ENCODE measurements at regions of chr12 and their contacts with region 1.

Region 1: GRCh38 chr12:69470189-69471075 is at the start of gene FRS2:
- DNase-seq: peak; percentile 95
- H3K4me3 ChIP-seq: peak within 1 kb of the TSS; percentile 91 to 99 (median 98)
- H3K27ac ChIP-seq: peak within 1 kb of the TSS; percentile 91 to 97 (median 96)
- H3K4me1 ChIP-seq: peaks cover 0 to 51% (median 45%) of the 10 kb centered on the region in 4 donors
- H3K27me3 ChIP-seq: no peaks in the 10 kb centered on the region
- CTCF ChIP-seq: peak in 2 of 4 experiments; percentile 6 to 25
- EP300 ChIP-seq: peak in 1 of 4 donors; percentile 32
- POLR2A ChIP-seq: peak; percentile 80 to 86
- total RNA-seq, gene FRS2: 33.8 to 48.4 (median 40.3) TPM

Region 2: GRCh38 chr12:69511469-69512267 is 41.2 kb after region 1 on chr12:
- intact Hi-C with region 1: loop called (anchors 5 kb)
- DNase-seq: no peak
- H3K4me3 ChIP-seq: no peak overlapping the region
- H3K27ac ChIP-seq: no peak overlapping the region
- H3K4me1 ChIP-seq: peaks cover 0 to 90% (median 76%) of the 10 kb centered on the region in 4 donors
- H3K27me3 ChIP-seq: no peaks in the 10 kb centered on the region
- CTCF ChIP-seq: no peak
- EP300 ChIP-seq: no peak
- POLR2A ChIP-seq: no peak

Region 3: DNA sequence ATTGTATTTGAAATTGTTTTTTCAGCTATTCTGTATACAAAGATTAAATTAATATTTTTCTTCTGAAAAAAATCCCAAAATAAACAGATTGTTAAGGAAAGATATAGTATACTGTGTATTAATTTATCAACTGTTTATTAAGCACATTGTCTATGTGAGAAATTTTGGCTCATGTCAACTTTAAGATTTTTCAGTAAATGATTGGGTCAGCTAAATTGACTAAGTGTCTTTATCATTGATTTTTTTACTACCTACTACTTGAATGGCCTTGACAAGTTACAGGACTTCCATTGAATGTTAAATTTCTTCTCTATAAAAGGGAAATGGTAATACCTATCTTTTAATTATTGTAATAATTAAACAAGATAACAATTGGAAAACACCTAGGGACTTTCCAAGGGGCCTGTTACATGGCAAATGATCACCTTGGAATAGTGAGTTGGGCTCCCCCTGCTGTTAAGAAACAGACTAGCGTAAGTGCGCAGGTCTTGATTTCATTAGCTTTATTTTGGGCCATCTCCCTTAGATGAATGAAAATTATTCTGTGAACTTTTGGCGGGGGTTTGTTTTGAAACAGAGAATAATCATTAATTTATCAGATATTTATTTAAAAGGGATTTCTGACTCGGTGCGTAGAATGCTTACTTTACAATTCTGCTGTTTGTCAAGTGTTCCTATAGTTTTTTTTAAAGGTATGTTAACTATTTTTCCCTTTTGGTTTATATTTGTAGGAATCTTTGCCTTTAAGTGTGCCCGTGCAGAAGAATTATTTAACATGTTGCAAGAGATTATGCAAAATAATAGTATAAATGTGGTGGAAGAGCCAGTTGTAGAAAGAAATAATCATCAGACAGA is 100.3 kb after region 1 on chr12:
- intact Hi-C with region 1: loop called (anchors 2 kb)
- DNase-seq: peak; percentile 68
- H3K4me3 ChIP-seq: no peak overlapping the region
- H3K27ac ChIP-seq: no peak overlapping the region
- H3K4me1 ChIP-seq: no peaks in the 10 kb centered on the region
- H3K27me3 ChIP-seq: no peaks in the 10 kb centered on the region
- CTCF ChIP-seq: peak; percentile 47 to 77 (median 68)
- EP300 ChIP-seq: no peak
- POLR2A ChIP-seq: no peak

Region 4: GRCh38 chr12:69585189-69586062 is 115.0 kb after region 1 on chr12 and contains the start of gene CCT2:
- intact Hi-C with region 1: loop called (anchors 5 kb)
- DNase-seq: peak; percentile 98
- H3K4me3 ChIP-seq: peak within 1 kb of the TSS; percentile 70 to 98 (median 82)
- H3K27ac ChIP-seq: peak within 1 kb of the TSS; percentile 85 to 91 (median 87)
- H3K4me1 ChIP-seq: peaks cover 0 to 12% (median 10%) of the 10 kb centered on the region in 4 donors
- H3K27me3 ChIP-seq: no peaks in the 10 kb centered on the region
- CTCF ChIP-seq: peak in 1 of 4 experiments; percentile 29
- EP300 ChIP-seq: no peak
- POLR2A ChIP-seq: peak; percentile 63 to 64
- total RNA-seq, gene CCT2: 87.0 to 126 (median 116) TPM

Region 5: GRCh38 chr12:69608114-69608513 is 137.7 kb after region 1 on chr12:
- intact Hi-C with region 1: no loop called
- DNase-seq: no peak
- H3K4me3 ChIP-seq: no peak overlapping the region
- H3K27ac ChIP-seq: no peak overlapping the region
- H3K4me1 ChIP-seq: no peaks in the 10 kb centered on the region
- H3K27me3 ChIP-seq: no peaks in the 10 kb centered on the region
- CTCF ChIP-seq: no peak
- EP300 ChIP-seq: no peak
- POLR2A ChIP-seq: no peak

Region 6: DNA sequence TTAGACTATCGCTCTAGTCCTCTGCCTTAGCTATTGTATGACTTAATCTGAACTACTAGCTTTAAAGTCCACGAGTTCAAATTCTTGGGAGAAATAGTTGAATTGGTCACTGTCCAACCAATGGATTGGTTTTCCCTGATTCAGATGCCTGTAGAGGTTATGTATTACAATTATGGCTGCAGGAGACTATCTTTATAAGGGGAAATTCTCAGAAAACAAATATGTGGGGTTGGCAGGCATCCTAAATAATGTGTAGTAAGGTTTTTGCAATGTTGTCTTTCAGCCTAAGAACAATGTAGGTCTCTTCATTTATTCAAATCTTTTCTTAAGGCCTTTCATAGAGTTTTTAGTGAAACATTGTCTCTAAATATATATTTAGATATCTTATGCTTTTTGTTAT is 381.5 kb after region 1 on chr12:
- intact Hi-C with region 1: no loop called
- DNase-seq: no peak
- H3K4me3 ChIP-seq: no peak overlapping the region
- H3K27ac ChIP-seq: no peak overlapping the region
- H3K4me1 ChIP-seq: no peaks in the 10 kb centered on the region
- H3K27me3 ChIP-seq: no peaks in the 10 kb centered on the region
- CTCF ChIP-seq: no peak
- EP300 ChIP-seq: no peak
- POLR2A ChIP-seq: no peak

Measured in sigmoid colon (tissue), 7 donors.